ENCODE measurements at regions of chr6 and their contacts with region 1.

Region 1: DNA sequence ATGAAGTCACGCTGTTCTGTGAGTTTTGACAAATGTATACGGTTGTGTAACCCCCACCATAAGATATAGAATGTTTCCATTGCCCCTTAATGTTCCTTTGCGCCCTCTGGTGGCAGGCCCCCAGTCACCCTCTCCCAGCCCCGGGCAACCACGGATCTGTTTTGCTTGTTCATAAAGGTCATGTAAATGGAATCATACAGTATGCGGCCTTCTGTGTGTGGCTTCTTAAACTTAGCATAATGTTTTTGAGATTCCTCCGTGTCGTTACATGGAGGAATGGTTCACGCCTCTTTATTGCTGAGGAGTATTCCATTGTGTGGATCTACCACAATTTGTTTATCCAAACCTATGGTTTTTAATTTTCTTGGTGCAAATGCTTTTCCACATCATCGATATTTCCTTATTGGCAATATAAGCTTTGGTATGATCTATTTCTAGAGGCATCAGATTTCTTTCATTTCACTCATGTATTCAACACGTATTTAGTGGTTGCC is 28.4 kb downstream of the LYRM2 start:
- DNase-seq: peak; percentile 83
- H3K4me3 Mint-ChIP-seq: no peak overlapping the region
- H3K27ac Mint-ChIP-seq: no peak overlapping the region
- H3K4me1 Mint-ChIP-seq: no peaks in the 10 kb centered on the region
- H3K27me3 Mint-ChIP-seq: no peaks in the 10 kb centered on the region

Region 2: GRCh38 chr6:89597988-89598692 is 12.1 kb before region 1 on chr6:
- CTCF ChIA-PET with region 1: interaction called, 14 read pairs
- POLR2A ChIA-PET with region 1: no interaction called
- intact Hi-C with region 1: no loop called
- DNase-seq: no peak
- H3K4me3 Mint-ChIP-seq: no peak overlapping the region
- H3K27ac Mint-ChIP-seq: no peak overlapping the region
- H3K4me1 Mint-ChIP-seq: peaks cover 20% of the 10 kb centered on the region
- H3K27me3 Mint-ChIP-seq: no peaks in the 10 kb centered on the region

Region 3: GRCh38 chr6:89638320-89639195 is 28.4 kb after region 1 on chr6 and contains the start of gene LYRM2:
- CTCF ChIA-PET with region 1: interaction called, 3 read pairs
- POLR2A ChIA-PET with region 1: no interaction called
- intact Hi-C with region 1: loop called (anchors 1 kb)
- DNase-seq: peak; percentile 95
- H3K4me3 Mint-ChIP-seq: peak within 1 kb of the TSS; percentile 81
- H3K27ac Mint-ChIP-seq: peak within 1 kb of the TSS; percentile 96
- H3K4me1 Mint-ChIP-seq: peaks cover 32% of the 10 kb centered on the region
- H3K27me3 Mint-ChIP-seq: no peaks in the 10 kb centered on the region
- total RNA-seq, gene LYRM2: 25.5 to 26.4 TPM

Measured in activated CD4-positive, alpha-beta memory T cell treated with anti-CD3 and anti-CD28 coated beads for 36 hours (primary cell).